ENCODE measurements at regions of chr14 and their contacts with region 1.

Region 1: GRCh38 chr14:75278422-75279161 is at the start of gene FOS:
- DNase-seq: peak; percentile 94 to 96 (median 96)
- H3K4me3 ChIP-seq: peak within 1 kb of the TSS; percentile 82 to 100 (median 99)
- H3K27ac ChIP-seq: peak within 1 kb of the TSS; percentile 93 to 97
- H3K4me1 ChIP-seq: peaks cover 27 to 73% (median 63%) of the 10 kb centered on the region in 4 experiments
- H3K27me3 ChIP-seq: peaks cover 0 to 25% (median 5%) of the 10 kb centered on the region in 5 experiments

Region 2: GRCh38 chr14:75141967-75142366 is 136.6 kb before region 1 on chr14:
- CTCF ChIA-PET with region 1: interaction called, 31 read pairs
- POLR2A ChIA-PET with region 1: interaction called, 4 read pairs
- DNase-seq: peak; percentile 63 to 74 (median 73)
- H3K4me3 ChIP-seq: no peak overlapping the region
- H3K27ac ChIP-seq: no peak overlapping the region
- H3K4me1 ChIP-seq: peaks cover 17 to 48% (median 33%) of the 10 kb centered on the region in 4 experiments
- H3K27me3 ChIP-seq: no peaks in the 10 kb centered on the region

Region 3: GRCh38 chr14:75258615-75259466 is 19.8 kb before region 1 on chr14:
- CTCF ChIA-PET with region 1: interaction called, 12 read pairs
- POLR2A ChIA-PET with region 1: interaction called, 87 read pairs
- DNase-seq: peak; percentile 100
- H3K4me3 ChIP-seq: peak overlapping the region; percentile 28 to 71 (median 59)
- H3K27ac ChIP-seq: peak overlapping the region; percentile 99 to 100
- H3K4me1 ChIP-seq: peaks cover 14 to 27% (median 22%) of the 10 kb centered on the region in 4 experiments
- H3K27me3 ChIP-seq: no peaks in the 10 kb centered on the region

Region 4: DNA sequence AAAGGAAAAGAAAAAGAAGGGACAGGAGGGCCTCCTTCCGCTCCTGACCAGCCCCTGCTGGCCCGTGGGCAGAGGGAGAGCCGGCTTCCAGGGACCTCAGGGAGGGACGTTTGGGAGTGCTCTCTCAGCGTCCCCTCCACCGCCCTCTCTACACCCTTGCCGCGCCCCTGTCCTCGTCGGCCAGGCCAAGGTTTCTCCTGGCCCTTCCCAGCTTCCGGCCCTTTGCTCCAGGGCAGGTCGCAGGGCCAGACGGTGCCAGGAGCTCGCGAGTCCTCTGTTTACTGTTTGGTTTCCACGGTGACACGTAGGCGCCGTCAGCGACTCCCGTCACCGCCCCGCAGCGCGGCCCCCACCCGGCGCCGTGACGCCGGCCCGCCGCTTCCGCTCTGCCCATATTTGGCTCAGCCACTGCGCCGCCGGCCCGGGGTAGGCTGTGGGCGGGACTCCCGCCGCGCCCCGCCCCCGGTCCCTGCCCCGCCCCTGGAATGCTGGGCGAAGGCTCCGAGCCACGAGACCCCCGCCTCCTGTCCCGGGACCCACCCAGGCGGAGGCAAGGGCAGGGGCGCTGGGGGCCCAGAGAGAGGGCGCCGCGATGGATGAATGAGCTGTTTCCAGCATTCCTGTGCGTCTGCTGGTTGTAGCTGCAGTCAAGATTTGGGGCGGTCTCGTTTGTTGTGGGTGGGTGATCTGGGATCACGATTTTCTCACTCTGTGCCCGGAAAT is 15.5 kb after region 1 on chr14:
- CTCF ChIA-PET with region 1: interaction called, 23 read pairs
- POLR2A ChIA-PET with region 1: interaction called, 42 read pairs
- DNase-seq: peak; percentile 95 to 96 (median 95)
- H3K4me3 ChIP-seq: peak overlapping the region; percentile 49 to 88 (median 74)
- H3K27ac ChIP-seq: peak overlapping the region; percentile 97 to 99
- H3K4me1 ChIP-seq: peaks cover 10 to 51% (median 37%) of the 10 kb centered on the region in 4 experiments
- H3K27me3 ChIP-seq: no peaks in the 10 kb centered on the region